Calu3 (cell line): ENCODE measurements at regions of chr3 and their contacts with region 1.

Region 1: GRCh38 chr3:96331341-96331740 is 483.1 kb upstream of the EPHA6 start:
- DNase-seq: peak; percentile 15
- H3K4me3 Mint-ChIP-seq: no peak overlapping the region
- H3K27ac Mint-ChIP-seq: no peak overlapping the region
- H3K4me1 Mint-ChIP-seq: no peaks in the 10 kb centered on the region
- H3K27me3 Mint-ChIP-seq: no peaks in the 10 kb centered on the region
- CTCF ChIP-seq: no peak

Region 2: GRCh38 chr3:94990952-94991705 is 1340.2 kb before region 1 on chr3:
- CTCF ChIA-PET with region 1: no interaction called
- intact Hi-C with region 1: no loop called
- DNase-seq: no peak
- H3K4me3 Mint-ChIP-seq: no peak overlapping the region
- H3K27ac Mint-ChIP-seq: no peak overlapping the region
- H3K4me1 Mint-ChIP-seq: no peaks in the 10 kb centered on the region
- H3K27me3 Mint-ChIP-seq: no peaks in the 10 kb centered on the region
- CTCF ChIP-seq: no peak

Region 3: DNA sequence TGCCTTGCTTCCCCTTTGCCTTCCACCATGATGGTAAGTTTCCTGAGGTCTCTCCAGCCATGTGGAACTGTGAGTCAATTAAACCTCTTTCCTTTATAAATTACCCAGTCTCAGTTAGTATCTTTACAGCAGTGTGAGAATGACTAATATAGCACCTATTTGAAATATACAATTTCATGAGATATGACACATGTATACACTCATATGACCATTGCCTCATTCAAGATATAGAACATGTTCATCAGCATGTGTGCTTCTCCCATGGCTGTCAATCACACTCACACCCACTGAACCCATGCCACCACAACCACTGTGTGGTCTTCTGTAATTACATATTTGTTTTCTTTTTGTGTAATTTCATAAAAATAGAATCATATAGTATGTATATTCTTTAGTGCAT is 116.4 kb before region 1 on chr3:
- CTCF ChIA-PET with region 1: no interaction called
- intact Hi-C with region 1: no loop called
- DNase-seq: no peak
- H3K4me3 Mint-ChIP-seq: no peak overlapping the region
- H3K27ac Mint-ChIP-seq: no peak overlapping the region
- H3K4me1 Mint-ChIP-seq: peaks cover 5% of the 10 kb centered on the region
- H3K27me3 Mint-ChIP-seq: no peaks in the 10 kb centered on the region
- CTCF ChIP-seq: no peak

Region 4: GRCh38 chr3:96491023-96491422 is 159.7 kb after region 1 on chr3:
- CTCF ChIA-PET with region 1: no interaction called
- intact Hi-C with region 1: no loop called
- DNase-seq: no peak
- H3K4me3 Mint-ChIP-seq: no peak overlapping the region
- H3K27ac Mint-ChIP-seq: no peak overlapping the region
- H3K4me1 Mint-ChIP-seq: no peaks in the 10 kb centered on the region
- H3K27me3 Mint-ChIP-seq: no peaks in the 10 kb centered on the region
- CTCF ChIP-seq: no peak

Region 5: DNA sequence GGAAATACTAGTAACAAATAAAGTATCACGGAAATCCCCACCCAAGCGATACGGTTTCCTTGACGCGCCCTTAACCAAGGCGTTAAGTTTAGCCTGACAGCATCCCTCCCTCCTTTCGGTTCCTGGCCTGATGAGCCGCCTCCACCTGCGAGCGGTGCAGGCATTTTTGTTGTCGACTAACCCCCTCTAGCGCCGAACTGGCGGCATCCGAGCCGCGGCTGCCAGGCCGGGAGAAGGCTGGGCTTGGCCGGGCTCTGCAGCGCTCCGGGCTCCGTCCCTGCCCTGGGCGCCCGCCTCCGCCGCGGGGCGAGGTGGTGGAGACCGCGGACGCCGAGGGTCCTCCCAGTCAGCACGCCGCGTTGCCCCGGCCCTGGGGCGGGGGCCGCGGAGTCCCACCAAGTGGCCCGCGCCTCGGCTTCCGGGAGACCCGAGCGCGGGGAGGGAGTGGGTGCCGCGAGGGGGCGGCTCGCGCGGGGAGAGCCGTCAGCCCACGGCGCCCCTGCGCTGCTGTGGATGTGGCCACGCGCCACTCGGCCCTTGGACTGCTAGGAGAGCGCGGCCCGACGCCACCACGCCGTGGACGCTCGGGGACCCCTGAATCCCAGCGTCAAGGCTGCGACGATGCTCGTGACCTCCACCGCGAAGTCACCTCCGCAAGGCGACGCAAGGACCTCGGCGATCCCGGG is 481.9 kb after region 1 on chr3:
- CTCF ChIA-PET with region 1: no interaction called
- intact Hi-C with region 1: loop called (anchors 1 kb)
- DNase-seq: peak; percentile 88
- H3K4me3 Mint-ChIP-seq: peak overlapping the region; percentile 89
- H3K27ac Mint-ChIP-seq: no peak overlapping the region
- H3K4me1 Mint-ChIP-seq: peaks cover 8% of the 10 kb centered on the region
- H3K27me3 Mint-ChIP-seq: no peaks in the 10 kb centered on the region
- CTCF ChIP-seq: peak; percentile 45